ENCODE measurements at regions of chr17 and their contacts with region 1.

Region 1: GRCh38 chr17:81414756-81415516 is 19.7 kb downstream of the BAHCC1 start:
- DNase-seq: no peak
- H3K4me3 Mint-ChIP-seq: no peak overlapping the region
- H3K27ac Mint-ChIP-seq: no peak overlapping the region
- H3K4me1 Mint-ChIP-seq: peaks cover 10% of the 10 kb centered on the region
- H3K27me3 Mint-ChIP-seq: peaks cover 8% of the 10 kb centered on the region

Region 2: DNA sequence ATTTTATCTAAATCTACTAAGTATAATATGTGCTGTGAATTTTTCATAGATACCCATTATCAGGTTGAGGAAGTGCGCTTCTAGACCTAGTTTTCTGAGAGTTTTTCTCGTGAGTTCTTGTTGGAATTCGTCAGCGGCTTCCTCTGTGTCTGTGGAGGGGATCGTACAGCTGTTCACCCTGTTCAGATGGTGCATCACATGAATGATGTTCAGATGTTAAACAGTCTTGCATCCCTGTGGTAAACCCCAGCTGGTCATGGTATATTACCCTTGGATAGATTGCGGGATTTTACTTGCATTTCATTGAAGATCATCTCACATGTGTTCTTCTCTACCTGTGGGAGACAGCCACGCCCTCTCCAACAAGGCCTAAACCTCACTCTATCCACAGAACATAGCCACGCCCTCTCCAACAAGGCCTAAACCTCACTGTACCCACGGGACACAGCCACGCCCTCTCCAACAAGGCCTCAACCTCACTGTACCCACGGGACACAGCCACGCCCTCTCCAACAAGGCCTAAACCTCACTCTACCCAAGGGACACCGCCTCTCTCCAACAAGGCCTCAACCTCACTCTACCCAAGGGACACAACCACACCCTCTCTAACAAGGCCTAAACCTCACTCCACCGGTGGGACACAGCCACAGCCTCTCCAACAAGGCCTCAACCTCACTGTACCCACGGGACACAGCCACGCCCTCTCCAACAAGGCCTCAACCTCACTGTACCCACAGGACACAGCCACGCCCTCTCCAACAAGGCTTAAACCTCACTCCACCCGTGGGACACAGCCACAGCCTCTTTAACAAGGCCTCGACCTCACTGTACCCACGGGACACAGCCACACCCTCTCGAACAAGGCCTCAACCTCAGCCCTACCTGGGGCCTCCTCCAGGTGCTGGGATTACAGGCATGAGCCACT is 603.5 kb before region 1 on chr17:
- CTCF ChIA-PET with region 1: no interaction called
- POLR2A ChIA-PET with region 1: interaction called, 10 read pairs
- DNase-seq: peak; percentile 51
- H3K4me3 Mint-ChIP-seq: no peak overlapping the region
- H3K27ac Mint-ChIP-seq: peak overlapping the region; percentile 96
- H3K4me1 Mint-ChIP-seq: peaks cover 67% of the 10 kb centered on the region
- H3K27me3 Mint-ChIP-seq: no peaks in the 10 kb centered on the region

Region 3: DNA sequence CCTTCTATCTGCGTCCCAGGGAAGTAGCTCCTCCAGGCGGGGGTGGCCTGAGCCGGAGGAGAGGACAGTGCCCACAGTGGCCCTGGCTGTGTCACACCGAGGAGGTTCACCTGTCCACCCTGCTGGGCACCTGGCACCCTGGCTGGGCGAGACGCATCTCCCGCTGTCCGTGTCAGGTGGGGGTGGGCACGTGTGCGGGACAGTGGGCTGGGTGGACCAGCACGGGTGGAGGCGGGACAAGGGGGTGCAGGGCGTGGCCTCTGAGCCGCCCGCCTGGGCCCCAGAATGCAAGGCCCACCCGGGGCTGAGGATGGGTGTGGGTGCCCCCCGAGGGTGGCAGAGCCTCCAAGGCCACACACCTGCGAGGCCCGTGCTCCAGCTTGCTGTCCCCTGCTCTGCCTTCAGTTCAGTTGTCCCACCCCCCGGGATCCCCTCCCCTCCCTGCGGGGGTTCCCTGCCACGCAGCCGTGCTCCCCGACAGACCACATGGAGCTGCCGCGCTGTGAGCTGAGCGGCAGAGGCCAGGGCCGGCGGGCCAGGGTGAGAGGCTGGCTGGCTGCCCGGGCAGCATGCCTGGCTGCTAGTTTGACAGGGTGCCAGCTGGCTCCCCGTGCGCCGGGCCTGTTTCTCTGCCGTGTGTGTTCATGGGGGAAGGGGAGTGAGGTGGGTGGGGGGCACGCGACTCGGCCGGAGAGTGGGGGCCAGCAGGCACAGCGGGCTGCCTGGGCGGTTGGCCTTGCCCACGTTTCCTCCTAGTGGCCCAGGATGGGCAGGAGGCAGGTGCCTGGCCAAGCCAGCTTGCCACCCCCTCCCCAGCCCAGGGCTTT is 14.2 kb after region 1 on chr17:
- CTCF ChIA-PET with region 1: no interaction called
- POLR2A ChIA-PET with region 1: no interaction called
- DNase-seq: no peak
- H3K4me3 Mint-ChIP-seq: no peak overlapping the region
- H3K27ac Mint-ChIP-seq: no peak overlapping the region
- H3K4me1 Mint-ChIP-seq: no peaks in the 10 kb centered on the region
- H3K27me3 Mint-ChIP-seq: peaks cover 17% of the 10 kb centered on the region